ENCODE measurements at regions of chr16 and their contacts with region 1.

Region 1: GRCh38 chr16:70428178-70428998 is 10.5 kb downstream of the ST3GAL2 start:
- DNase-seq: peak; percentile 40
- ATAC-seq: no peak
- H3K4me3 ChIP-seq: no peak overlapping the region
- H3K4me3 Mint-ChIP-seq: peak overlapping the region; percentile 49
- H3K27ac ChIP-seq: peak overlapping the region; percentile 39 to 63
- H3K27ac Mint-ChIP-seq: peak overlapping the region; percentile 66
- H3K4me1 ChIP-seq: peaks cover 52 to 57% of the 10 kb centered on the region in 2 donors
- H3K4me1 Mint-ChIP-seq: peaks cover 58% of the 10 kb centered on the region
- H3K27me3 ChIP-seq: no peaks in the 10 kb centered on the region
- H3K27me3 Mint-ChIP-seq: no peaks in the 10 kb centered on the region
- CTCF ChIP-seq: no peak

Region 2: DNA sequence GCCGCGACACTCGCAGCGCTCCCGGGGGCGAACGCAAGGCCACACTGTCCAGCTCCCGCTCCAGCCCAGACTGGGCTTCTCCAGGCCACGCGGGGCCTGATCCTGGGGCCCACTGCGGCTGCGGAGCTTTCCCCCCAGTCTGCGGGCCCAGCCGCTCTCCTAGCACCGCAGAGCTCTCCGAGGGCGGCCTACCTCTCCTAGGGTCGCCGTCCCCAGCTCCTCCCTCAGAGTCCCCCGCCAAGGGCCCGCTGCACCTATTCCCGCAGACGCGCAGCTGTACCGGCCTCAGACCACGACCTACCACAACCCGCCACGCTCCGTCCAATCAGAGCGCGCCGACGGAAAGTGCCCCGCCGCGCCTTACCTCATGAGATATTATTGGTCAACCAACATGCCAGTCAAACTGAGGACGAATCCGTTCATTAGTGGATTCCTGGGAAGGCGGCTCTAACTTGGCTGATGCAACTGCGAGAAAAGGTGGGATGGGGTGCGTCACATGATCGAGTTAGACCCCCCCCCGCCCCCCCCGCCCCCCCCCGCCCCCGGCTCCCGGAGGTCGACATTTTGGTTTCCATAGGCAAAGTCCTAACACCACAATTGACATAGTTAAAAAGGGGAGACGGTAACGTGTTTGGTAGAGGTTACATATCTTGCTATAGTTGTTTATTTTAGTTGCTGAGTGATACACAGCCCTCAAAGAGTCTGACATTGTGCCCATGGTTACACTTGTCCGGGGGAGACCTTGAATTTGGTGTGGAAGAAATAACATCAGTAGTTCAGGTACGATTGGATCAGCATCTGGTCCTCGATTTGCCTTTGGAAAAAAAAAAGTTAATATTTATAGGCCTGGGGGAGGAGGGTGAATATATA is 138.9 kb before region 1 on chr16 and contains the start of gene AARS1:
- CTCF ChIA-PET with region 1: no interaction called
- POLR2A ChIA-PET with region 1: no interaction called
- intact Hi-C with region 1: loop called (anchors 2 kb)
- DNase-seq: peak; percentile 98
- ATAC-seq: peak; percentile 97
- H3K4me3 ChIP-seq: peak within 1 kb of the TSS; percentile 80 to 91 (median 86)
- H3K4me3 Mint-ChIP-seq: peak within 1 kb of the TSS; percentile 99
- H3K27ac ChIP-seq: peak within 1 kb of the TSS; percentile 79 to 90
- H3K27ac Mint-ChIP-seq: peak within 1 kb of the TSS; percentile 96
- H3K4me1 ChIP-seq: peaks cover 0 to 16% of the 10 kb centered on the region in 2 donors
- H3K4me1 Mint-ChIP-seq: peaks cover 15% of the 10 kb centered on the region
- H3K27me3 ChIP-seq: no peaks in the 10 kb centered on the region
- H3K27me3 Mint-ChIP-seq: no peaks in the 10 kb centered on the region
- CTCF ChIP-seq: no peak
- total RNA-seq, gene AARS1: 54.4 and 57.8 TPM in 2 replicates

Region 3: DNA sequence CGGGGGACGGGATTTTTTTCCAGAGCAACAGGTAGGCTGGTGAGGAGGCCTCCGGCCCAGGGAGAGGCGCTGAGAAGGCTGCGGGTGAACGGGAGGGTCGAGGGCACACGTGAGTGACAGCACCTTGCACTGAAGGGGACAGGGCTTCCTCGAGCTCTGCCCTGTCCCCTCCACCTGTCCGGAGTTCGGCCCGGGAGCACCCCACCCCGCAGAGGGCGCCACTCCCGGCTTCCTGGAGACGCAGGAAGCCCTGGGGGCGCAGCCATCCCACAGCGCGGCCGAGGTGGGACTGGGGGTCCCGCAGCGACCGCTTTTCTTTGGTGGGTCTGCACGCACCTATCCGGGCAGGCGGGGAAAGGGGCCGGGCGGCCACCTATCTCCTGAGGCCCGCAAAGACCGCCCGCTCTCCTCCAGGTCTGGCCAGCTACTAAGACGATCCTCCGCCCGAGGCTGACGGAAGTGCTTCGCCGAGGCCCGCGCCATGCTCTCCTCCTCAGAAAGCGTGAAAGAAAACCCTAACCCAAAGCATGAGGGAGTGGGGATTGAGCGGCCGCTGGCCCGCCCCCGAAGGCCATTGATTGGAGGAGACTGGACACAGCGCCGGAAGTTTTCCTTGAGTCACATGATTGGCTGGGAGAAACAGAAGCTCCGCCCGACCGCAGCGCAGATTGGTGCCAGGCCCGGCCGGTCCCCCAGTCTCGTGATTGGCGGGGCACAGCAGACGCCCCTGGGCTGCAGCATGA is 47.4 kb before region 1 on chr16:
- CTCF ChIA-PET with region 1: interaction called, 9 read pairs
- POLR2A ChIA-PET with region 1: interaction called, 6 read pairs
- intact Hi-C with region 1: loop called (anchors 1 kb)
- DNase-seq: peak; percentile 96
- ATAC-seq: peak; percentile 93
- H3K4me3 ChIP-seq: peak overlapping the region; percentile 58 to 89 (median 74)
- H3K4me3 Mint-ChIP-seq: peak overlapping the region; percentile 97
- H3K27ac ChIP-seq: peak overlapping the region; percentile 64 to 81
- H3K27ac Mint-ChIP-seq: peak overlapping the region; percentile 95
- H3K4me1 ChIP-seq: peaks cover 18 to 25% of the 10 kb centered on the region in 2 donors
- H3K4me1 Mint-ChIP-seq: peaks cover 8% of the 10 kb centered on the region
- H3K27me3 ChIP-seq: no peaks in the 10 kb centered on the region
- H3K27me3 Mint-ChIP-seq: no peaks in the 10 kb centered on the region
- CTCF ChIP-seq: no peak

Region 4: GRCh38 chr16:70402916-70403659 is 25.3 kb before region 1 on chr16:
- CTCF ChIA-PET with region 1: interaction called, 5 read pairs
- POLR2A ChIA-PET with region 1: interaction called, 9 read pairs
- intact Hi-C with region 1: loop called (anchors 1 kb)
- DNase-seq: no peak
- ATAC-seq: no peak
- H3K4me3 ChIP-seq: no peak overlapping the region
- H3K4me3 Mint-ChIP-seq: peak overlapping the region; percentile 20
- H3K27ac ChIP-seq: no peak overlapping the region
- H3K27ac Mint-ChIP-seq: peak overlapping the region; percentile 8
- H3K4me1 ChIP-seq: peaks cover 39 to 52% of the 10 kb centered on the region in 2 donors
- H3K4me1 Mint-ChIP-seq: peaks cover 45% of the 10 kb centered on the region
- H3K27me3 ChIP-seq: peaks cover 0 to 2% (median 0%) of the 10 kb centered on the region in 4 experiments
- H3K27me3 Mint-ChIP-seq: no peaks in the 10 kb centered on the region
- CTCF ChIP-seq: no peak

Region 5: DNA sequence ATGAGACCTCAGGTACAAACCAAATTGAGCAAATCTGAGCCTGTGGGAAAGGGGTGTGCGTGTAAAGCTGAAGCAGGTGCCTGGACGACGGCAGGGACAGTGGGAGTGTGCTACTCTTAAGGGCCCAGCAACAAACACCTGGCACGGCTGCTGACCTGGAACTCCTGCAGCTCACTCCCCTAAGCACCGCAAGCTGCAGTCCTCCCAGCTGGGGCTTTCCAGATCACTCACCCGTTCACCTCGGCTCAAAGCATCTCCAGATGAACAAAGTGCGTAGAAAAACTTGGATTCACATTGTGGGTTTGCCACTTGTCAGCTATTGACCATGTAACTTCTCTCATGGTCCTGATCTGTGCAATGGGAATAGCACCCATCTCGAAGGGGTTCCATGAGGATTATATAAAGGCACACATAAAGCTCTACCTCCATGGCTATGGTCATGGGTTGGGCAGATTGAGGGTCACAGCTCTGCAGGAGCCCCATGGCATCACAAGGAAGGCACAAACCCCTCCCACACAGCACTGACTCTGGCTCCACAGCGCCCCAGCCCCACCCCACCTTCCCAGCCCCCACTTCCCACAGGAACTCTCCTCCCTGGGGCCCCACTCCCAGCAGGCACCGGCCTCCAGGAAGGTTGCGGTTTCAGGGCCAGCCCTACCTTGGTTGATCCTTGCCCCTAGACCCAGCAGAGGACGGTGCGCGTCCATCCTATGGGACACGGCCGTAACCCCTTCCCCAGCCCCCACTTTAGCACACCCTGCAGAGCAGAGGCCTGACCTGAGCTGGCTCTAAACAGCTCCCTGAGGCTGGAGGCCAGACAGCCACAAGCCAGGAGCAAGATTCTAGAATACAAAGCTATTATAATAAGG is 11.4 kb before region 1 on chr16:
- CTCF ChIA-PET with region 1: interaction called, 8 read pairs
- POLR2A ChIA-PET with region 1: interaction called, 16 read pairs
- intact Hi-C with region 1: loop called (anchors 1 kb)
- DNase-seq: peak; percentile 81
- ATAC-seq: peak; percentile 93
- H3K4me3 ChIP-seq: no peak overlapping the region
- H3K4me3 Mint-ChIP-seq: peak overlapping the region; percentile 71
- H3K27ac ChIP-seq: peak overlapping the region; percentile 51 to 54
- H3K27ac Mint-ChIP-seq: peak overlapping the region; percentile 76
- H3K4me1 ChIP-seq: peaks cover 40 to 44% of the 10 kb centered on the region in 2 donors
- H3K4me1 Mint-ChIP-seq: peaks cover 59% of the 10 kb centered on the region
- H3K27me3 ChIP-seq: no peaks in the 10 kb centered on the region
- H3K27me3 Mint-ChIP-seq: no peaks in the 10 kb centered on the region
- CTCF ChIP-seq: no peak

Region 6: GRCh38 chr16:70438969-70439862 is 10.8 kb after region 1 on chr16 and contains the start of gene ST3GAL2:
- CTCF ChIA-PET with region 1: no interaction called
- POLR2A ChIA-PET with region 1: interaction called, 19 read pairs
- intact Hi-C with region 1: loop called (anchors 1 kb)
- DNase-seq: peak; percentile 93
- ATAC-seq: peak; percentile 97
- H3K4me3 ChIP-seq: peak within 1 kb of the TSS; percentile 67 to 82 (median 73)
- H3K4me3 Mint-ChIP-seq: peak within 1 kb of the TSS; percentile 91
- H3K27ac ChIP-seq: peak within 1 kb of the TSS; percentile 47 to 51
- H3K27ac Mint-ChIP-seq: peak within 1 kb of the TSS; percentile 90
- H3K4me1 ChIP-seq: peaks cover 34 to 40% of the 10 kb centered on the region in 2 donors
- H3K4me1 Mint-ChIP-seq: peaks cover 39% of the 10 kb centered on the region
- H3K27me3 ChIP-seq: no peaks in the 10 kb centered on the region
- H3K27me3 Mint-ChIP-seq: no peaks in the 10 kb centered on the region
- CTCF ChIP-seq: no peak
- total RNA-seq, gene ST3GAL2: 71.3 and 77.1 TPM in 2 replicates

Measured in B cell (primary cell).